Transverse colon (tissue), 4 donors: ENCODE measurements at regions of chr9 and their contacts with region 1.

Region 1: GRCh38 chr9:124532897-124533296 is 25.7 kb upstream of the NR5A1 start:
- DNase-seq: no peak
- H3K4me3 ChIP-seq: no peak overlapping the region
- H3K27ac ChIP-seq: no peak overlapping the region
- H3K4me1 ChIP-seq: no peaks in the 10 kb centered on the region
- H3K27me3 ChIP-seq: no peaks in the 10 kb centered on the region
- CTCF ChIP-seq: no peak
- EP300 ChIP-seq: no peak
- POLR2A ChIP-seq: no peak

Region 2: GRCh38 chr9:124415102-124415851 is 117.6 kb before region 1 on chr9 and contains the start of gene PSMB7:
- in situ Hi-C with region 1: loop called in 2 of 4 experiments (anchors 10 kb)
- intact Hi-C with region 1: loop called (anchors 2 kb)
- DNase-seq: peak; percentile 98
- H3K4me3 ChIP-seq: peak within 1 kb of the TSS; percentile 67 to 94 (median 81)
- H3K27ac ChIP-seq: peak within 1 kb of the TSS; percentile 42 to 80 (median 71)
- H3K4me1 ChIP-seq: peaks cover 0 to 12% (median 10%) of the 10 kb centered on the region in 4 donors
- H3K27me3 ChIP-seq: no peaks in the 10 kb centered on the region
- CTCF ChIP-seq: peak; percentile 79 to 92 (median 82)
- EP300 ChIP-seq: no peak
- POLR2A ChIP-seq: peak; percentile 56
- total RNA-seq, gene PSMB7: 11.6 to 136 (median 51.6) TPM

Region 3: GRCh38 chr9:124606027-124606426 is 73.1 kb after region 1 on chr9:
- in situ Hi-C with region 1: no loop called
- intact Hi-C with region 1: no loop called
- DNase-seq: no peak
- H3K4me3 ChIP-seq: no peak overlapping the region
- H3K27ac ChIP-seq: no peak overlapping the region
- H3K4me1 ChIP-seq: no peaks in the 10 kb centered on the region
- H3K27me3 ChIP-seq: no peaks in the 10 kb centered on the region
- CTCF ChIP-seq: no peak
- EP300 ChIP-seq: no peak
- POLR2A ChIP-seq: no peak

Region 4: DNA sequence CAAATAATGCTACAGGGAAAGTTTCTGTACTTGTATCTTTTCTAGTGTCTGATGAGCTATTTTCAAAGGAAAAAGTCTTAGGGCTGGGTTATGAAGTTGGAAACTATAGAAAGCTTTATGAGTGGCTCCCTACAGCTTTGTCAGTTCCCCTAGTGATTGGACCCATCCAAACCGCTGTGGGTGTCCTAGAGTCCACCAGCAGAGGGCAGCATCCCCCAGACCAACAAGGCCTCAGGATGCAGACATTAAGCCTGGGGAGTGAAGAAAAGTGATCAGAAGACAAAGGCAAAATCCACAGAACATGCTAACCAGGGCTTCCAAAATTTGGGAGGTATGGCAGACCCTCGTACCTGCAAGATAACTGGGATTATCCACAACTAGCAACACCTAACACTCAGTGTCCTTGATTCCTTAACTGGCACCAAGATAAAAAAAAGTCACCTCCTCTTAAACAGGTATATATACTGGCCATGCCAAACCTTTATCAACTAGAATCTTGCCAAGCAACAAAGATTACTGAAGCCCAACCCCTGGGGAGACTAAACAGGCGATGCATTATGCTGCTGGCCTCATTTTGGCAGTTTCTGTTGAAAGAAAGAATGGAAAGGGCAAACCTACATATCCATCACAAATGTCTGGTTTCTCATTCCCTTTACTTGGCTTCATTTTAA is 84.7 kb after region 1 on chr9:
- in situ Hi-C with region 1: no loop called
- intact Hi-C with region 1: no loop called
- DNase-seq: peak; percentile 83
- H3K4me3 ChIP-seq: no peak overlapping the region
- H3K27ac ChIP-seq: no peak overlapping the region
- H3K4me1 ChIP-seq: peaks cover 0 to 7% (median 3%) of the 10 kb centered on the region in 4 donors
- H3K27me3 ChIP-seq: no peaks in the 10 kb centered on the region
- CTCF ChIP-seq: peak; percentile 82 to 89 (median 87)
- EP300 ChIP-seq: no peak
- POLR2A ChIP-seq: no peak